HCT116 (cell line): ENCODE measurements at regions of chr2 and their contacts with region 1.

Region 1: DNA sequence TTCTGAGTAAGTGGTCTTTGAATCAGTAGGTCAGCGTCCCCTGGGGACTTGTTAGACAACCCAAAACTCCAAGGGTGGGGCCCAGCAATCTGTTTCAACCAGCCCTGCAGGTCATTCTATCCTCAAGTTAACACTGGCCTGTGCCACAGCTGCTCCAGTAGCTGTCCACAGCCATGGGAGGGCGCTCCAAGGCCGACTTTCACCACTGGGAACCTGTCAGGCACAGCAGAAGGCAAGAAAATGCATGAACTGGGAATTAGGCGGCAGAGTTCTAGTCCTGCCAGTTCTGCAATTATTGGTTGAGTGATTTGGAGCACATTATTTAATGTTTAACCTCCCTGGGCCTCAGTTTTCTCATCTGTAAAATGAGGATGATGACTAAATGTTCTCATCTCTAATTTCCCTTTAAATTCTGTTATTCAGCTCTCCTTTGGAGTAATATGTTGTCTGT is 17.4 kb upstream of the MRPL33 start:
- DNase-seq: peak; percentile 56
- ATAC-seq: peak; percentile 95
- H3K4me3 ChIP-seq: no peak overlapping the region; a peak in 1 of 4 replicates
- H3K27ac ChIP-seq: no peak overlapping the region
- H3K4me1 ChIP-seq: peaks cover 12 to 25% of the 10 kb centered on the region in 2 experiments
- H3K27me3 ChIP-seq: no peaks in the 10 kb centered on the region
- CTCF ChIP-seq: peak; percentile 94 to 99 (median 94)
- POLR2A ChIP-seq: no peak
- RAD21 ChIP-seq: peak; percentile 98

Region 2: DNA sequence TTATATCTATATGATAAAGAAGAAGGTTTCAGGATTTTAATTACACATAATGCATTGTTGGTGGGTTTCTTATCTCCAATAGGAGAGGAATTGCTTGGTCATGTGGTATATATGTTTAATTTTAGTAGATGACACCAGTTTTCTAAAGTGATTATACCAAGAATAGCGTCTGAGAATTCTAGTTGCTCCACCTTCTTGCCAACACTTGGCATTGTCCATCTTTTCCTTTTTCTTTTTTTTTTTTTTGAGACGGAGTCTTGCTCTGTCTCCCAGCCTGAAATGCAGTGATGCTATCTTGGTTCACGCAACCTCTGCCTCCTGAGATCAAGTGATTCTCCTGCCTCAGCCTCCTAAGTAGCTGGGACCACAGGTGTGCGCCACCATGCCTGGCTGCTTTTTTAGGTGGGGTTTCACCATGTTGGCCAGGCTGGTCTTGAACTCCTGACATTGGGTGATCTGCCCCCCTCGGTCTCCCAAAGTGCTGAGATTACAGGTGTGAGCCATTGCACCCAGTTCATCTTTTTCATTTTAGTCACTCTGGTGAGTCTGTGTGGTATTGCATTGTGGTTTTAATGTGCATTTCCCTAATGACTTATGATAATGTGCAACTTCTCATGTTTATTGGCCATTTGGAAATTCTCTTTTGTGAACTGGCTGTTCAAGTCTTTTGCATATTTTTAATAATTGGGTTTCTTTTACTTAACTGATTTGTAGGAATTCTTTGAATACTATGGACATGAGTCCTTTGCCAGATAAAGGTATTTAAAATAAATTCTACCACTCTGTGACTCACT is 208.6 kb before region 1 on chr2:
- CTCF ChIA-PET with region 1: no interaction called
- POLR2A ChIA-PET with region 1: no interaction called
- RAD21 ChIA-PET with region 1: no interaction called
- intact Hi-C with region 1: no loop called
- DNase-seq: no peak
- ATAC-seq: no peak
- H3K4me3 ChIP-seq: no peak overlapping the region
- H3K27ac ChIP-seq: no peak overlapping the region
- H3K4me1 ChIP-seq: no peaks in the 10 kb centered on the region
- H3K27me3 ChIP-seq: no peaks in the 10 kb centered on the region
- CTCF ChIP-seq: no peak
- POLR2A ChIP-seq: no peak
- RAD21 ChIP-seq: no peak

Region 3: GRCh38 chr2:27703638-27704341 is 50.4 kb before region 1 on chr2:
- CTCF ChIA-PET with region 1: interaction called, 8 read pairs
- POLR2A ChIA-PET with region 1: interaction called, 9 read pairs
- RAD21 ChIA-PET with region 1: interaction called, 3 to 4 read pairs
- intact Hi-C with region 1: loop called (anchors 5 kb)
- DNase-seq: peak; percentile 71
- ATAC-seq: peak; percentile 73
- H3K4me3 ChIP-seq: no peak overlapping the region
- H3K27ac ChIP-seq: no peak overlapping the region
- H3K4me1 ChIP-seq: peaks cover 17 to 42% of the 10 kb centered on the region in 2 experiments
- H3K27me3 ChIP-seq: no peaks in the 10 kb centered on the region
- CTCF ChIP-seq: peak; percentile 85 to 95 (median 90)
- POLR2A ChIP-seq: no peak
- RAD21 ChIP-seq: peak; percentile 98

Region 4: DNA sequence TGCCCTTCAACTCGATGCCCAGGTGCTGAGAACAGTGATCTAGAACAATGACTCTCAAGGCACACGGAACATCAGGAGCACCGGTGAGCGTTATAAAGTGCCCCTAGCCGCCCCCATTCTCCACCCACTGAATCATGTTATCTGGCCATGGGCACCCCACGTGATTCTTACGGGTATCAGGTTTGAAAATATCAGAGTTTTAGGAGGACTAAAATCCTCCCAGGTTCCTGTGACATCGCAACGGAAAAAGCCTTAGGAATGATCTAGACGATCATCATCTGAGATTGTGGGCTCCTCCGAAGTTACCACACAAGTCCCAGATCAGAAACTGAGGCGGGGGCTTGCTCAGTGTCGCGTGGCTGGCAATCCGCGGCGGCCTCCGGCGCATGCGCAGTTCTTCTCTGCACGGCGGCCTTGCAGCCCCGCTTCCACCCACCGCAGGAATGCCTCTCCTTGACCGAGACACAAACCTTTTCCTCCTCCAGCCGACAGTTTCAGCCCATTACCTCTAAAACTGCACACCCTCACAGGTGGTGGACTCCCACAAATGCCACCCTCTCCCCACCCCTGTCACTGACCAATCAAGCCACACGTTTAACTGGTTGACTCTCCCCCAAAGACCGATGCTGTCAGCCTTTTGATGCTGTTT is 11.6 kb after region 1 on chr2:
- CTCF ChIA-PET with region 1: interaction called, 16 read pairs
- POLR2A ChIA-PET with region 1: interaction called, 7 read pairs
- RAD21 ChIA-PET with region 1: no interaction called
- intact Hi-C with region 1: no loop called
- DNase-seq: peak; percentile 55
- ATAC-seq: peak; percentile 89
- H3K4me3 ChIP-seq: peak overlapping the region; percentile 40 to 62
- H3K27ac ChIP-seq: peak overlapping the region; percentile 55
- H3K4me1 ChIP-seq: peaks cover 16 to 43% of the 10 kb centered on the region in 2 experiments
- H3K27me3 ChIP-seq: no peaks in the 10 kb centered on the region
- CTCF ChIP-seq: no peak
- POLR2A ChIP-seq: peak; percentile 41
- RAD21 ChIP-seq: no peak

Region 5: DNA sequence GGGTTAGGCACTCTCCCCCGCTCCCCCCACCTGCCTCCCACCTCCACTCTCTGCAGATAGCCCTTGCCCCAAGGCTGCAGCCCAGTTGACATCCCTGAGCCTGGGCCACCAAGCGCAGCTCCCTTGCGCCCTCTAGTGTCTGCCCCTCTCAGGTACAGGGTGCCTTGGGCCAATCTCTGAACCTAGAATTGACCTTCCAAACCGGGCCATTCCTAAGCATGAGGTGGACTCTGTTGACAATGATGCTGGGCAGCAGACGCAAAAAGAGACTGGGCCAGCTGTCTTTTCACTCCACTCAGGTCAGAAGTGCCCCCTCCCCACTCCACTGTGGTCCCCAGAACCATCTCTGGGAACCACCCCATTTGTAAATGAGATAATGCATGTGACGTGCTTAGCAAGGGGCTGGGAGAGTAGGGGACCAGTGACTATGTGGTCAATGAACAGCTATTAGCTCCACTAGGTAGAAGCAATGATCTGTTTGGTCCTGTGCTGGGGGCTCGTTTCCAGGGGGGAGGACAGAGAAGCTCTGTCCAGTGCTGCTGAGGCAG is 698.4 kb after region 1 on chr2:
- CTCF ChIA-PET with region 1: interaction called, 4 read pairs
- POLR2A ChIA-PET with region 1: no interaction called
- RAD21 ChIA-PET with region 1: no interaction called
- intact Hi-C with region 1: loop called (anchors 1 kb)
- DNase-seq: peak; percentile 32
- ATAC-seq: peak; percentile 91
- H3K4me3 ChIP-seq: no peak overlapping the region
- H3K27ac ChIP-seq: no peak overlapping the region
- H3K4me1 ChIP-seq: peaks cover 8 to 31% of the 10 kb centered on the region in 2 experiments; a peak in 3 of 4 replicates
- H3K27me3 ChIP-seq: no peaks in the 10 kb centered on the region
- CTCF ChIP-seq: peak; percentile 85 to 98 (median 97)
- POLR2A ChIP-seq: no peak
- RAD21 ChIP-seq: peak; percentile 97